Ovary (tissue), 10 donors: ENCODE measurements at regions of chr5 and their contacts with region 1.

Region 1: GRCh38 chr5:12896086-12896485 is 991.8 kb upstream of the CTNND2 start:
- DNase-seq: no peak
- H3K4me3 ChIP-seq: no peak overlapping the region
- H3K27ac ChIP-seq: no peak overlapping the region
- H3K4me1 ChIP-seq: no peaks in the 10 kb centered on the region
- H3K27me3 ChIP-seq: no peaks in the 10 kb centered on the region
- CTCF ChIP-seq: no peak
- EP300 ChIP-seq: no peak
- POLR2A ChIP-seq: no peak

Region 2: GRCh38 chr5:12566441-12566840 is 329.6 kb before region 1 on chr5:
- intact Hi-C with region 1: no loop called
- DNase-seq: no peak
- H3K4me3 ChIP-seq: no peak overlapping the region
- H3K27ac ChIP-seq: no peak overlapping the region
- H3K4me1 ChIP-seq: no peaks in the 10 kb centered on the region
- H3K27me3 ChIP-seq: no peaks in the 10 kb centered on the region
- CTCF ChIP-seq: no peak
- EP300 ChIP-seq: no peak
- POLR2A ChIP-seq: no peak

Region 3: DNA sequence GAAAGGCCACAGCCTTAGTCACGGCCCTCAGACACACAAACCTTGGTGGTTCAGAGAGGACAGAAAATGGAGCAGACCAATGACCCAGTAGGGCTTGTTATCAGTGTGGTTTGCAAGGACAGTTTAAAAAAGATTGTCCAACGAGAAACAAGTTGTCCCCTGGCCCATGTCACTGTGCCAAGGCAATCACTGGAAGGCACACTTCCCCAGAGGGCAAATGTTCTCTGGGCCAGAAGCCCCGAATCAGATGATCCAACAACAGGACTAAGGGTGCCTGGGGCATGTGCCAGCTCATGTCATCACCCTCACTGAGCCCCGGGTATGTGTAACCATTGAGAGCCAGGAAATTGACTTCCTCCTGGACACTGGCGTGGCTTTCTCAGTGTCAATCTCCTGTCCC is 41.7 kb before region 1 on chr5:
- intact Hi-C with region 1: loop called in 1 of 4 experiments (anchors 1 kb)
- DNase-seq: no peak
- H3K4me3 ChIP-seq: no peak overlapping the region
- H3K27ac ChIP-seq: no peak overlapping the region
- H3K4me1 ChIP-seq: no peaks in the 10 kb centered on the region
- H3K27me3 ChIP-seq: no peaks in the 10 kb centered on the region
- CTCF ChIP-seq: no peak
- EP300 ChIP-seq: no peak
- POLR2A ChIP-seq: no peak